ENCODE measurements at regions of chr2 and their contacts with region 1.

Region 1: DNA sequence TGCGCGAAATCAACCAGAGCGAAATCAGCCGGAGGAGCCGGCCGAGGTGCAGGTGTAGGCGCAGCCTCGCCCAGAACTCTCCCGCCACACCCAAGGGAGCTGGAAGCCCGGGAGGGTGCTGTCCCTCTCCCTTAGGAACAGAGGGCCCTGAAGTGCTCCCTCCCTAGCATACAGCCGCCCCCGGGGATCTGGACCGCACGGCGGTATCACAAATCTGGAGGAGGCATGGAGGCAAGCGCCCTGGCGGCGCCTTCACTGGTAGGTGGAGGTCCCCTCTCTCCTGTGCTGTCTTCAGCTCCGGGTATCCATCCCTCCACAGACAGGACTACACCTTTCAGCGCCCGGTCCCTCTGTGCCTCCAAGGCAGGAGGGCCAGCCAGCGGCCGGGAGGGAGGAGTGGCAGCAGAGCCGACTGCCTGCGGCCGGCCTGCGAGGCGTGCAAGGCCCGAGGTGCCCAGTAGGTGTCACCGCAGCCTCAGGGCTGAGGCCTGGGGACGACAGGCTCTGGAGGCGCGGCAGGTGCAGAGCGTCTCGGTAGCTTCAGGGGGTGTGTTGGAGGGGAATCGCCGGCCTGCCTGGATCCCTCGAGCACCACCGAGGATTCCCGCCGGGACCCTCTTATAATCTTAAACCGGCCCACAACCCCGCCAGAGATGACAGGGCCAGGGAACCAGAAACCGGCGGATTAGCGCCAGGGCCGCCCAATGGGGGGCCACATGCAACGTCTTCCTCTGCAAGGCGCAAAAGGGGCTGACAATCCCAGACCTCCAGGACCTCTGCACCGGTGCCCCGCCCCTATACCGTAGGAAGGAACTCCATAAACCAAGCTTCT is 2.8 kb downstream of the IHH start:
- DNase-seq: peak; percentile 82
- ATAC-seq: peak; percentile 92
- H3K4me3 Mint-ChIP-seq: peak overlapping the region; percentile 42
- H3K27ac Mint-ChIP-seq: no peak overlapping the region
- H3K4me1 Mint-ChIP-seq: peaks cover 21% of the 10 kb centered on the region
- H3K27me3 Mint-ChIP-seq: peaks cover 62% of the 10 kb centered on the region

Region 2: DNA sequence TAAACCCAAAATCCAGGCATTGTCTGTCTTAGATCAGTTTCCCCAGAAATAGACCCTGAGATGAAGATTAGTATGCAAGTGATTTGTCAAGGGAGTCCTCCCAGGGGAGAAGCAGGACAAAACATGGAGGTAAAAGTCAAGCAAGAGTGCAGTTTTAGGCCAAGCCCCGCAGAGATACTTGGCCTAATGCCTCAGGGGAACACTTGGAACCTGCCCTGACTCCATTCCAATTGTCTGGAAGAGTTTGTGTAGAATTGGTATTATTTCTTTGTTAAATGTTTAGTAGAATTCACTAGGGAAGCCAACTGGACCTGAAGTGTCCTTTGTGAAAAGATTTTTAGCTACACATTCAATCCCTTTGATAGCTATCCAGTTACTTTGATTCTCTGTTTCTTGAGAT is 142.9 kb before region 1 on chr2:
- CTCF ChIA-PET with region 1: no interaction called
- POLR2A ChIA-PET with region 1: no interaction called
- DNase-seq: no peak
- ATAC-seq: no peak
- H3K4me3 Mint-ChIP-seq: no peak overlapping the region
- H3K27ac Mint-ChIP-seq: no peak overlapping the region
- H3K4me1 Mint-ChIP-seq: peaks cover 3% of the 10 kb centered on the region
- H3K27me3 Mint-ChIP-seq: peaks cover 10% of the 10 kb centered on the region

Region 3: GRCh38 chr2:218990052-218990451 is 67.9 kb before region 1 on chr2:
- CTCF ChIA-PET with region 1: no interaction called
- POLR2A ChIA-PET with region 1: no interaction called
- DNase-seq: no peak
- ATAC-seq: no peak
- H3K4me3 Mint-ChIP-seq: no peak overlapping the region
- H3K27ac Mint-ChIP-seq: no peak overlapping the region
- H3K4me1 Mint-ChIP-seq: peaks cover 2% of the 10 kb centered on the region
- H3K27me3 Mint-ChIP-seq: peaks cover 86% of the 10 kb centered on the region

Region 4: DNA sequence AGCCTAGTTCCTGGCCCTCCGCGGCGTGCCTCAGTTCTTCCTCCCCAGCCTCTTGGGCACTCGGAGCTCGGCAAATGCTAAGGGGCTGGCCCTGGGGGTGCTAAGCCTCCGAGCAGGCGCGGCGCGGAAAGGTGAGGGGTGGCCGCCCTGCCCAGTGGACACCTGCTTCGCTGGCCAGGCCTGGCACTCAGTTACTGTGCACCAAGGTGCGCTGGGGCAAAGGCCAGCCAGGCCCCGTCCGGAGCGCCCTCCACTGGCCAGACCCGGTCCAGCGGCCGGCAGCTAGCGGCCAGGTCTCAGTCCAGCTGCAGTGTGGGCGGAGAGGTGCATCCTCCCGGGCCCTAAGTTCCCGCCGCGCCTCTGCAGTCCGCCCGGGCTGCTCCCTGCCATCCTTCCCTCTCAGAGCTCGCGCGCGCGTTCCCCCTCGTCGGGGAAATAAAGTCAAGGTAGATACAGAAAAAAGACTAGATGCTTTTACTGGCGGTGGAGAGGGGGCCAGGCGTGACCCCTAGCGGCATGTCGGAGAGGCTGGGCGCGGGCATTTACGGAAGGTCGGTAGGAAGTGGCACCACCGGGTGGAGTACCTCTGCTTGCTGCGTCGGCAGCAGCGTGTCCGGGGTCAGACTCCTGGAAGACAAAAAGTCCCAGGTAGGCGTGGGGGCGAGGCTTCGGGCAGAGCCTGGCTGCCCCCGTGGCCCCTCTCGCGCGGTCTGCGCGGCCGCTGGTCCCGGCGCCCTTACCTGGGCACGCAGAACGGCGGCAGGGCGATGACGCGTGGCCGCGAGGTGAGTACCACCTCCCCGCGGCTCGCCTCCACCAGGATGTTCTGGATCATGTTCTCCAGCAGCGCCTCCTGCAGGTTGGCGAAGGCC is 55.3 kb before region 1 on chr2:
- CTCF ChIA-PET with region 1: no interaction called
- POLR2A ChIA-PET with region 1: no interaction called
- DNase-seq: peak; percentile 51
- ATAC-seq: peak; percentile 13
- H3K4me3 Mint-ChIP-seq: no peak overlapping the region
- H3K27ac Mint-ChIP-seq: no peak overlapping the region
- H3K4me1 Mint-ChIP-seq: peaks cover 3% of the 10 kb centered on the region
- H3K27me3 Mint-ChIP-seq: peaks cover 64% of the 10 kb centered on the region

Region 5: DNA sequence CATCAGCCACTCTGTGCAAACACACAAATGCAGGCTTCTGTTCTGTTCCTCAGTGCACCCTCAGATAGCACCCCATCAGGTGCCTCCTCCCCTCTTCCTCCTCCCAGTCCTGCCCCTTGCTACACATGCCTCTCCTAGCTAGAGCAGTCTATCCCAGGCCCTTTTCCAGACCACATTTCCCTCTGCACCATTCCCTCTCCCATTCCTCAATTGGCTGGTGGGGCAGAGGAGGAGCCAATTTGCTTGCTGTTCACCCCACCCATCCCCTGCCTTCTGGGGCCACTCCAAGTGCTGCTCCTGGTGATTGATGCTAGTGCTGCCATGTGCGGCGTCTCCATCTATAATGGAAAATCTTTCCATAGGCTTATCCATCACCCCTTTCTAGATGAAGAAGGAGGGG is 22.0 kb before region 1 on chr2:
- CTCF ChIA-PET with region 1: no interaction called
- POLR2A ChIA-PET with region 1: no interaction called
- DNase-seq: no peak
- ATAC-seq: no peak
- H3K4me3 Mint-ChIP-seq: no peak overlapping the region
- H3K27ac Mint-ChIP-seq: no peak overlapping the region
- H3K4me1 Mint-ChIP-seq: no peaks in the 10 kb centered on the region
- H3K27me3 Mint-ChIP-seq: peaks cover 49% of the 10 kb centered on the region

Region 6: DNA sequence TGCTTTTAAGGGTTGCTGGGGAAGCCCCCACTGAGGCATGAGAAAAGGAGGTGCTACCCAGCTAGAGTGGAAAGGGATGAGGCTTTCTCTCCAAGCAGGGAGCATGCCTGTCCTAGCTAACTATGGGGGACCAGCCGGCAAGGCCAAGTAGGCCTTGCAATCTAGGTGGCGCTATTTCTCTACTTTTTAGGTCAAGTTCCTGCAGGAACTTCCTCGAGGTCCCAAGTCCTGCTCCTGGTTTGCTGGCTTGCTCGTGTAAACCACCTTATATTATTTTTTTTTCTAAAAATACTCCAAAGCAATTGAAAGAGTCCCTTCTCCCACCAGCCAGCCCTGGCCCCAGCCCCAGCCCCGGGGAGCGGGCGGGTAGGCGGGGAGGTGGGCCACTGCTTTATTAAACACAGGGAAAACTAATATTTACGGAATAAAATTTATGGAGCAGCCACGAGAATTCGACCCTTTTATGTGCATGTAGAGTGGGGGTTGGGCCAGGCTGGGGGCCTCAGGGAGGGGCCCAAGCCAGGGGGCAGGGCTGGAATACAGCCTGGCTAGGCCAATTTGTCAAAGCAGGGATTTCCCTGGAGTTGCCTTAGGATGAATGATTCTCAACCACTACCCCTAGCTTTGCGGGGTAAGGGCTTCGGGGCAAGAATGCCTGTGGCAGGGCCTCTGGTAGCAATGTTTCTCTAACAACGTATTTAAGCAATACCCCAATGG is 15.6 kb after region 1 on chr2:
- CTCF ChIA-PET with region 1: interaction called, 22 read pairs
- POLR2A ChIA-PET with region 1: no interaction called
- DNase-seq: peak; percentile 28
- ATAC-seq: peak; percentile 42
- H3K4me3 Mint-ChIP-seq: no peak overlapping the region
- H3K27ac Mint-ChIP-seq: no peak overlapping the region
- H3K4me1 Mint-ChIP-seq: no peaks in the 10 kb centered on the region
- H3K27me3 Mint-ChIP-seq: no peaks in the 10 kb centered on the region